Activated CD4-positive, alpha-beta T cell treated with anti-CD3 and anti-CD28 coated beads, Interleukin-2, amount 10 ng/mL, durations not matched to agents 24 days and 14 days (primary cell): ENCODE measurements at regions of chr14 and their contacts with region 1.

Region 1: GRCh38 chr14:64764641-64765520 is 60.7 kb downstream of the PLEKHG3 start:
- DNase-seq: peak; percentile 92
- H3K4me3 Mint-ChIP-seq: peak overlapping the region; percentile 37
- H3K27ac Mint-ChIP-seq: no peak overlapping the region
- H3K4me1 Mint-ChIP-seq: peaks cover 38% of the 10 kb centered on the region
- H3K27me3 Mint-ChIP-seq: peaks cover 17% of the 10 kb centered on the region

Region 2: GRCh38 chr14:64671591-64671990 is 93.3 kb before region 1 on chr14:
- intact Hi-C with region 1: loop called (anchors 1 kb)
- DNase-seq: peak; percentile 78
- H3K4me3 Mint-ChIP-seq: no peak overlapping the region
- H3K27ac Mint-ChIP-seq: no peak overlapping the region
- H3K4me1 Mint-ChIP-seq: peaks cover 32% of the 10 kb centered on the region
- H3K27me3 Mint-ChIP-seq: peaks cover 18% of the 10 kb centered on the region

Region 3: GRCh38 chr14:64937821-64938193 is 172.9 kb after region 1 on chr14:
- intact Hi-C with region 1: no loop called
- DNase-seq: no peak
- H3K4me3 Mint-ChIP-seq: no peak overlapping the region
- H3K27ac Mint-ChIP-seq: no peak overlapping the region
- H3K4me1 Mint-ChIP-seq: peaks cover 47% of the 10 kb centered on the region
- H3K27me3 Mint-ChIP-seq: no peaks in the 10 kb centered on the region